B cell (primary cell): ENCODE measurements at regions of chr22 and their contacts with region 1.

Region 1: DNA sequence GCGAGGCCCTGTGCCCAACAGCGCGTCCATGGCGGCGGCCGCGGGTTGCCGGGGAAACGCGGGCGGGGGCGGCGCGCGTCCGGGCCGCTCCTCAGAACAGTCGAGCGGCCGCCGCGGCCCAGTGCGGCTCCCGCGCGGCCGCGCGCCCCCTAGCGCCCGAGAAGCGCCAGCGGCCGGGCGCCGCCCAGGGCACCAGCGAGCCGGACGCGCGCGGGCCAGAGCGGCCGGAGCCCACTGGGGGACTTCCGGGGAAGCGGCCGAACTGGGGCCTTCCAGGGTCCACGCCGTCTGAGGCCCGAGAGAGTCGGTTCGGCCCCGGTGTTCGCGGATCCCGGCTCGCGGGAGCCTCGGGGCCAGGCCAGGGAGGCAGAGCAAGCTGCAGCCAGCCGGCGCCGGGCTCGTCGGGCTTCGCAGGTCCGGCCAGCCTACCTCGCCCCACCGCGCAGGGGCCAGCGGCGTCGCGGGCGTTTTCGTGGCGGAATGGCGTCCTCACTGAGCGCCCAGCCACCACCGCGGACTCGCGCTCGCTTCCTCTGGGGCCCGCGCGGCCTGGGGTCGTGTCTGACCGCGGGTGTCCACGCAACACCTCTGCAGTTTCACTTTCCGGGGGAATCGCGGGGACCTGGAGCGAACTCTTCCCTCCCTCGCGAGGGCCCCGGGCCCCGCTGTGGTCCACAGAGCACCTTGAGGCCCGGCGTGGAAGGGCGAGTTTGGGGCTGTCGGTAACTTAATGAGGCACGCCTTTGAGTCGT is at the start of gene DENND6B:
- DNase-seq: peak; percentile 86
- ATAC-seq: peak; percentile 94
- H3K4me3 ChIP-seq: peak within 1 kb of the TSS in 4 of 5 experiments; percentile 51 to 81 (median 72)
- H3K4me3 Mint-ChIP-seq: peak within 1 kb of the TSS; percentile 90
- H3K27ac ChIP-seq: peak within 1 kb of the TSS; percentile 24 to 76
- H3K27ac Mint-ChIP-seq: peak within 1 kb of the TSS; percentile 90
- H3K4me1 ChIP-seq: peaks cover 8 to 13% of the 10 kb centered on the region in 2 donors
- H3K4me1 Mint-ChIP-seq: peaks cover 21% of the 10 kb centered on the region
- H3K27me3 ChIP-seq: peaks cover 0 to 6% (median 0%) of the 10 kb centered on the region in 4 experiments
- H3K27me3 Mint-ChIP-seq: no peaks in the 10 kb centered on the region
- CTCF ChIP-seq: peak; percentile 67
- total RNA-seq, gene DENND6B: 10.3 and 10.6 TPM in 2 replicates

Region 2: DNA sequence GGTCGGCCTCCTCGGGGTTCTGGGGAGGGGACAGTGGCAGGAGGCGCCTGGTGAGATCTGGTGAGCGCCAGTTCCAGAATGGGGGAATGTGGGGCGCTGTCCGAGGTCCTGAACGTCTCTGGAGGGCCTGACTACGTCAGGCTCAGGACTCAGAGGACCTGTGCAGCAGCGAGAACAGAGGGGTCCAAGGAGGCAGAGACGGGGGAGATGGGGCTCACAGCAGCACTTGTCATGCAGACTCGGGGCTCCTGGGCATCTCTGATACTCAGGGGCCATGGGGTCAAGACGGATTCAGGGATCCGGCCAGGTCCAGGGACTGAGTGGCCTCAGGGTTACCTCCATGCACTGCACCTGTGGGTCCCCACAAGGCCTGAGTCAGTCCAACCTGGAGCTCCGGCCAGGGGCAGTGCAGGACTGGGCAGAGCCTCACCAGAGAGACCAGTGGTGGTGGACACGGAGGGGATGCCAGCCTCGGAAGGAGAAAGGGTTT is 591.7 kb before region 1 on chr22:
- CTCF ChIA-PET with region 1: no interaction called
- POLR2A ChIA-PET with region 1: no interaction called
- intact Hi-C with region 1: no loop called
- DNase-seq: no peak
- ATAC-seq: no peak
- H3K4me3 ChIP-seq: no peak overlapping the region
- H3K4me3 Mint-ChIP-seq: no peak overlapping the region
- H3K27ac ChIP-seq: no peak overlapping the region
- H3K27ac Mint-ChIP-seq: no peak overlapping the region
- H3K4me1 ChIP-seq: no peaks in the 10 kb centered on the region
- H3K4me1 Mint-ChIP-seq: no peaks in the 10 kb centered on the region
- H3K27me3 ChIP-seq: peaks cover 0 to 21% (median 4%) of the 10 kb centered on the region in 4 experiments
- H3K27me3 Mint-ChIP-seq: peaks cover 58% of the 10 kb centered on the region
- CTCF ChIP-seq: no peak

Region 3: DNA sequence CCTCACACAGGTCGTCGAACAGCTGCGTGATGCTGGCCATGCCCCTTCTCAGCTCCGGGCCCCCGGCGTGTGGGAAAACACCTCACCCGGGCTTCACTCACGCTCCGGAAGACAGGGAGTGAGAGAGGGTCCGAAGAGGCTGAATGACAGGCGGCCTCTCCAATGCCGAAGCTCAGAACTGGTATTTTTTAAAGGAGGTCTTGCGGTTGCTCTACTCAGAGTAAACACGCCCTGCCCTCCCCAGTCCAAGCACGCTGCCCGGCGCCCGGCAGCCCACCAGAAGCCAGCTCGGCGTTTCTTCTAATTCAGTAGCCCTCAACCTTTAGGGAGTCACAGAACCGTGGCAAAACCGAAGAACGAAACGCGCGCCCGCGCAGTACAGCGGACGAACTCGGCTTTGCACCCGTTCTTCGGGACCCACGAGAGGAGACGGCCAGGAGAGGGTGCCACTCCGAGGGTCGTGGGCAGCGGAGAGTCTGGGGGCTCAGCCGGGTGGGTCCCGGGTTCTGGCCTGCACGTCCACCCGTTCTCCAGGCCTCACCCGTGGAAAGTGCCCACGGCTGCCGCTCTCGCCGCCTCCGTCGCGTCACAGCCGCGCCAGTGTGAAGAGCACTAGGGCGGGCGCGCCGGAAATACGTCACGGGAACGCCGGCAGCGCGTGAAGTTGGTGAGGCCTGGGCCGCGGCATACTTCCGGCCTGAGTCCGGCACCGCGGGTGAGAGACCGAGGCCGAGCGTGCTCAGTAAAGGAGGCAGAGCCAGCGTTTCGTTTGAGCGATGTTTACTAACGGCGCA is 82.5 kb before region 1 on chr22 and contains the start of gene TUBGCP6:
- CTCF ChIA-PET with region 1: interaction called, 10 read pairs
- POLR2A ChIA-PET with region 1: no interaction called
- intact Hi-C with region 1: loop called (anchors 1 kb)
- DNase-seq: peak; percentile 96
- ATAC-seq: peak; percentile 81
- H3K4me3 ChIP-seq: peak within 1 kb of the TSS; percentile 65 to 99 (median 90)
- H3K4me3 Mint-ChIP-seq: peak within 1 kb of the TSS; percentile 96
- H3K27ac ChIP-seq: peak within 1 kb of the TSS; percentile 91 to 96
- H3K27ac Mint-ChIP-seq: peak within 1 kb of the TSS; percentile 99
- H3K4me1 ChIP-seq: peaks cover 33 to 66% of the 10 kb centered on the region in 2 donors
- H3K4me1 Mint-ChIP-seq: peaks cover 40% of the 10 kb centered on the region
- H3K27me3 ChIP-seq: no peaks in the 10 kb centered on the region
- H3K27me3 Mint-ChIP-seq: no peaks in the 10 kb centered on the region
- CTCF ChIP-seq: no peak
- total RNA-seq, gene TUBGCP6: 137 and 139 TPM in 2 replicates

Region 4: DNA sequence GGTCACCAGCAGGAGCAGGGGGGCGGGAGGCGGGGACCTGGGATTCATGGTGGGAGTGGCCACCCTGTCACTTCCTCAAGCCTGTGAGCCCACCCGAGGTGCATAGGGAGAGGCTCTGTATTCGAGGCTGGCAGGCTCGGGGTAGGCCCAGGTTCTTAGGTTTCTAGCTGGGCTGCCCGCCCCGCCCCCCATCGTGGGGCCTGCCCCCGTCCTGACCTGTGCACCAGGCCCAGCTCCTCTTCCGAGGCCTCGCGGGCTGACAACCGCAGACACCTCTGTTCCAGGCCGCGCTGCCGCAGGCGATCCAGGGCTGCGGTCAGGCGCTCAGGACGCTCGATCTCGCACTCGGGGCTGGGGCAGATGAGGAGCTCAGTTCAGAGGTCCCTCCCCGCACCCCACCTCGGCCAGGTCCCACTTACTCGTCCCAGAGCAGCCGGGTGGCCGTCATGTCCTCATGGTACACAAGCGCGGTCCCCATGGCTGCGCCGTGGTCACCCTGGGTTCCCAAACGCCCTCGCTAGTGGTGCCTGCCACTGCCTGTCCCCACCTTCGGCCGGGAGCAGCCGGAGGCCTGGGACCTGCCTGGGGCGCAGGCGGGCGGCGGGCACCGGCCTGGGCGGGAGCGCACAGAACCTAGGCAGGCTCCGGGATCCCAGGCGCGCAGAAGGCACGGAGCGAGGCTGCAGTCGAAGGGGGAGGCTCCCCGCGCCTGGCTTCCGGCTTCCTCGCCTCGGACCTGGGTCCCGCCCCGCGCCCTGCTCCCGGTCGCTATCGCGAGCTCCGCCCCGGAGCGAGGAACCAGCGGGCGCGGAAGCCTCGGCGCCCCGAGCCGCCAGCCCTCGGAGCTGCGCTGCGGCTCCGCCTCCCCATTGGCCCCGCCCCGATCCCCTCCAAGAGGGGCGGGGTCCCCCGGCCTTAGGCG is 76.3 kb before region 1 on chr22 and contains the start of gene HDAC10:
- CTCF ChIA-PET with region 1: interaction called, 52 read pairs
- POLR2A ChIA-PET with region 1: interaction called, 4 read pairs
- intact Hi-C with region 1: loop called (anchors 1 kb)
- DNase-seq: peak; percentile 85
- ATAC-seq: peak; percentile 84
- H3K4me3 ChIP-seq: peak within 1 kb of the TSS; percentile 56 to 81 (median 79)
- H3K4me3 Mint-ChIP-seq: peak within 1 kb of the TSS; percentile 86
- H3K27ac ChIP-seq: peak within 1 kb of the TSS; percentile 41 to 49
- H3K27ac Mint-ChIP-seq: peak within 1 kb of the TSS; percentile 76
- H3K4me1 ChIP-seq: peaks cover 15 to 44% of the 10 kb centered on the region in 2 donors
- H3K4me1 Mint-ChIP-seq: peaks cover 24% of the 10 kb centered on the region
- H3K27me3 ChIP-seq: no peaks in the 10 kb centered on the region
- H3K27me3 Mint-ChIP-seq: no peaks in the 10 kb centered on the region
- CTCF ChIP-seq: no peak
- total RNA-seq, gene HDAC10: 120 and 136 TPM in 2 replicates

Region 5: GRCh38 chr22:50293441-50294318 is 33.5 kb before region 1 on chr22:
- CTCF ChIA-PET with region 1: interaction called, 9 read pairs
- POLR2A ChIA-PET with region 1: interaction called, 4 read pairs
- intact Hi-C with region 1: loop called (anchors 1 kb)
- DNase-seq: peak; percentile 73
- ATAC-seq: peak; percentile 58
- H3K4me3 ChIP-seq: peak overlapping the region in 1 of 5 experiments; percentile 33
- H3K4me3 Mint-ChIP-seq: peak overlapping the region; percentile 64
- H3K27ac ChIP-seq: no peak overlapping the region
- H3K27ac Mint-ChIP-seq: peak overlapping the region; percentile 46
- H3K4me1 ChIP-seq: peaks cover 37 to 44% of the 10 kb centered on the region in 2 donors
- H3K4me1 Mint-ChIP-seq: peaks cover 41% of the 10 kb centered on the region
- H3K27me3 ChIP-seq: peaks cover 0 to 32% (median 12%) of the 10 kb centered on the region in 4 experiments
- H3K27me3 Mint-ChIP-seq: peaks cover 17% of the 10 kb centered on the region
- CTCF ChIP-seq: no peak

Region 6: DNA sequence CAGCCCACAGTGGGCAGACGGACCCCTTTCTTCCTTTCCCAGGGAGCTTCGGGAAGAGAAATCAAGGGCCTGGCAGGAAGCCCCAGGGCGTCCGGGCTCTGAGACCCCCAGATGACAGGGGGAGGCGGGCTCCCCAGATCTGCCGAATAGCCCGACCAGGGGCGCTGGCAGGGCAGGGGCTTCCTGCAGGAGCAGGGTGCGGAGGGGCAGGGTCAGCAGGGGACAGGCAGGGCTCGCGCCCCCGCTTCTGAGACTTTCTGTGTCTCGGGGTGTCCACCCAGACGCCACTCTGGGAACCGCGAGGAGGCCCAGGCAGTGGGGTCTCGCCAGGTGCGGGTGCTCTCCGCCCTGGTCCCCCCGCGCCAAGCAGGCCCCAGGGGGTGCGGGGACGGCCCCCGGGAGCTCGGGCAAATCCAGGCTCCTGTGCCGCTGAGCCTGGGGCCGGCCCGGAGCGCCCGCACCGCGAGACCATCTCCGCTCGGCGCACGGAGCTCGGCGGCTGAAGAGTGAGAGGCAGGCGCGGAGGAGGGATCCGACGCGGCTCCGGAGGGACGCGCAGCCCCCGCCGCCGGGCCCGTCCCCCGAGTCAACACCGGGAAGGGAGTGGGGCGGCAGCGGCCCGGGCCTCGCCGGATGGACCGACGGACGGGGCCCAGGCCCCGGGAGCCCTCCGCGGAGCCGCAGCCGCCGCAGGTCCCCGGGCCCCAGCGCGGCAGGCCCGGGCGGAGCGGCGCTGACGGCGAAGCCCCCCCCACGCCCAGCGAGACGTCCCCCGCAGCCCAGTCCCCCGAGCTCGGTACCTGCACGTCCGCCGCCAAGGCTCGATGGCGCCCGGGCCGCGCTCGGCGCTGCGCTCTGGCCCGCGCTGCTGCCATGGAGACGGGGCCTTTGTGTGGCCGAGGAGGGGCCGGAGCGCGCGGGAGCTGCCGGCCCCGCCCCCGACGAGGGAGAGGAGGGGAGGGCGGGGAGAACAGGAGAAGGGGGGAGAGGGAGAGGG is 20.1 kb before region 1 on chr22 and contains the start of gene PLXNB2:
- CTCF ChIA-PET with region 1: interaction called, 10 read pairs
- POLR2A ChIA-PET with region 1: interaction called, 3 read pairs
- intact Hi-C with region 1: no loop called
- DNase-seq: peak; percentile 62
- ATAC-seq: peak; percentile 42
- H3K4me3 ChIP-seq: peak within 1 kb of the TSS; percentile 7 to 58 (median 45)
- H3K4me3 Mint-ChIP-seq: peak within 1 kb of the TSS; percentile 84
- H3K27ac ChIP-seq: no peak within 1 kb of the TSS
- H3K27ac Mint-ChIP-seq: peak within 1 kb of the TSS; percentile 87
- H3K4me1 ChIP-seq: peaks cover 65 to 75% of the 10 kb centered on the region in 2 donors
- H3K4me1 Mint-ChIP-seq: peaks cover 44% of the 10 kb centered on the region
- H3K27me3 ChIP-seq: peaks cover 0 to 28% (median 7%) of the 10 kb centered on the region in 4 experiments
- H3K27me3 Mint-ChIP-seq: peaks cover 5% of the 10 kb centered on the region
- CTCF ChIP-seq: no peak
- total RNA-seq, gene PLXNB2: 30.3 and 31.4 TPM in 2 replicates

Region 7: DNA sequence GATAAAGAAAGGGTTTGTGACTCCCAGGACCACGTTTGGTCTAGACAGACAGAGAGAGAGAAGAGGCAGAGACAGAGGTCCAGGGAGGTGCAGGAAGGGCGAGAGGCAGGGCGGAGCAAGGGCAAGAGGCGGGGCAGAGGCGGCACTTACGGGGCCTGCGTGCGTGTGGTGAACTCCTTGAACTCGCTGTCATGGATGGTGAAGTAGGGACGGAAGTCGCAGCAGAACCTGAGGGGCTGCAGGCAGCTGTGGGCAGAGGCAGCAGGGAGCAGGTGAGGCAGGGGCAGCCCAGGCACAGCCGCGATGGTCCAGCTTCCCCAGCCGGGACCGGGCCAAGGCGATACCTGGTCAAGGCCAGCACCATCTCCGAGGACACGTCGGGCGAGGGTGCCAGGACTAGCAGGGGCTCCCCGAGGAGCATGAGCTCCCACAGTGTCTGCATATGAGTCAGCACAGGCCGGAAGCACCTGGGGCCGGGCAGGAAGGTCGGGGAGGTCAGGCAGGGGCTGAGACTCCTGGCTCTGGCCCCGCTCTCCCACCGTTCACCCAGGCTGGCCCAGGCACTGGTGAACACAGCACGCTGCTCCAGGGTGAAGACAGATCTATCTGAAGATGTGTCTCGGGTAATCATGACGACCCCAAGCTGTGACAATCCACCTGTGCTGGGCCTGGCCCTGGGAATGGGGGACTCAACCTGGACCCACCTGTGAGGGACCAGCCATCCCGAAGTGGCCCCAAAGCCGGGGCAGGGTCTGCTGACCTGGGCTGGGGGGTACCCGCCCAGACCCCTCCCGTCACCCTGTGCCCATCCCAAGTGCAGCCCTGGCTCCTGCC is 12.5 kb before region 1 on chr22:
- CTCF ChIA-PET with region 1: interaction called, 37 read pairs
- POLR2A ChIA-PET with region 1: interaction called, 12 read pairs
- intact Hi-C with region 1: loop called (anchors 1 kb)
- DNase-seq: peak; percentile 89
- ATAC-seq: peak; percentile 86
- H3K4me3 ChIP-seq: peak overlapping the region in 4 of 5 experiments; percentile 34 to 61 (median 45)
- H3K4me3 Mint-ChIP-seq: peak overlapping the region; percentile 88
- H3K27ac ChIP-seq: peak overlapping the region; percentile 63 to 71
- H3K27ac Mint-ChIP-seq: peak overlapping the region; percentile 97
- H3K4me1 ChIP-seq: peaks cover 23 to 48% of the 10 kb centered on the region in 2 donors
- H3K4me1 Mint-ChIP-seq: peaks cover 43% of the 10 kb centered on the region
- H3K27me3 ChIP-seq: no peaks in the 10 kb centered on the region
- H3K27me3 Mint-ChIP-seq: no peaks in the 10 kb centered on the region
- CTCF ChIP-seq: no peak